Endothelial cell of umbilical vein (primary cell): ENCODE measurements at regions of chr20 and their contacts with region 1.

Region 1: DNA sequence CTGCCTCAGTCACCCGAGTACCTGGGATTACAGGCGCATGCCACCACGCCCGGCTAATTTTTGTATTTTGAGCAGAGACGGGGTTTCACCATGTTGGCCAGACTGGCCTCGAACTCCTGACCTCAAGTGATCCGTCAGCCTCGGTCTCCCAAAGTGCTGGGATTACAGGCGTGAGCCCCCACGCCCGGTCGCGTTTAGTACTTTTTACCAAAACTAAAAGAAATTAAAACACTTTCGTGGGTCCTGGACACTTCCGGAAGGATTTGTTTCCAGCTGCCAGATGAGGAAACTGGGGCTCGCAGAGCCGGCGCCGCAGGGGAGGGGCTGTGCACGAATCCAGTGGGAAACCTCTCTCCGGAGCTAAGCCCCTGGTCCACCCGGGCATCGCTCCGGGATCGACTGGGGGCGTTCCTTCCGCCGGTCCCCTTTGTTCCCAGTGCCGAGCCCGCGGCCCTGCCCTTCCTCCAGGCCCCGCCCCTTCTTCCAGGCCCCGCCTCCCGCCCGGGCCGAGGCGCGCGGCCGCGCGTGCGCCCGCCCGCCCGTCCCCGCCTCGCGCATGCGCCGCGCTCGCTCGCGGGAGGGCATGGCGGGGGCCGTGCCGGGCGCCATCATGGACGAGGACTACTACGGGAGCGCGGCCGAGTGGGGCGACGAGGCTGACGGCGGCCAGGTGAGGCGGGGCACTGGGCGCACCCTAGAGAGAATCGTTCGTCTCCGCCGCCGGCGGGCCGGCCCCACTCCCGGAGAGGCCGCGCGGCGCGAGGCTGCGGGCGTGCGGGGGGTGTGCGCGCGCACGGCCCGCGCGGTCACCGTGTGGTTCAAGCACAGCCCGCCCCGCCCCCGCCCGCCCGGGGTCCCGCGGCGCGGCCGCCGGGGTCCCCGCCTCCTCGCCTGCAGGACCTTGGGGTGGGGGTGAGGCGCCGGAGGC is at the start of gene NELFCD:
- DNase-seq: peak; percentile 79
- H3K4me3 ChIP-seq: peak within 1 kb of the TSS; percentile 84 to 98 (median 96)
- H3K27ac ChIP-seq: peak within 1 kb of the TSS; percentile 48
- H3K4me1 ChIP-seq: peaks cover 3% of the 10 kb centered on the region
- H3K27me3 ChIP-seq: peaks cover 0 to 1% of the 10 kb centered on the region in 2 experiments
- CTCF ChIP-seq: no peak
- POLR2A ChIP-seq: peak; percentile 79
- total RNA-seq, gene NELFCD: 92.5 and 93.2 TPM in 2 replicates

Region 2: GRCh38 chr20:58890518-58891085 is 90.4 kb before region 1 on chr20:
- CTCF ChIA-PET with region 1: no interaction called
- POLR2A ChIA-PET with region 1: no interaction called
- dilution Hi-C with region 1: no loop called
- intact Hi-C with region 1: loop called (anchors 2 kb)
- DNase-seq: peak; percentile 87
- H3K4me3 ChIP-seq: peak overlapping the region; percentile 17 to 91 (median 70)
- H3K27ac ChIP-seq: peak overlapping the region; percentile 47
- H3K4me1 ChIP-seq: peaks cover 30% of the 10 kb centered on the region
- H3K27me3 ChIP-seq: peaks cover 2% of the 10 kb centered on the region in 2 experiments
- CTCF ChIP-seq: no peak
- POLR2A ChIP-seq: peak; percentile 25

Region 3: GRCh38 chr20:59006864-59007664 is 26.1 kb after region 1 on chr20 and contains the start of gene CTSZ:
- CTCF ChIA-PET with region 1: no interaction called
- POLR2A ChIA-PET with region 1: no interaction called
- dilution Hi-C with region 1: no loop called
- intact Hi-C with region 1: loop called (anchors 1 kb)
- DNase-seq: peak; percentile 34
- H3K4me3 ChIP-seq: peak within 1 kb of the TSS; percentile 64 to 74 (median 68)
- H3K27ac ChIP-seq: peak within 1 kb of the TSS; percentile 89
- H3K4me1 ChIP-seq: peaks cover 41% of the 10 kb centered on the region
- H3K27me3 ChIP-seq: no peaks in the 10 kb centered on the region
- CTCF ChIP-seq: no peak
- POLR2A ChIP-seq: peak; percentile 81
- total RNA-seq, gene CTSZ: 299 and 304 TPM in 2 replicates

Region 4: DNA sequence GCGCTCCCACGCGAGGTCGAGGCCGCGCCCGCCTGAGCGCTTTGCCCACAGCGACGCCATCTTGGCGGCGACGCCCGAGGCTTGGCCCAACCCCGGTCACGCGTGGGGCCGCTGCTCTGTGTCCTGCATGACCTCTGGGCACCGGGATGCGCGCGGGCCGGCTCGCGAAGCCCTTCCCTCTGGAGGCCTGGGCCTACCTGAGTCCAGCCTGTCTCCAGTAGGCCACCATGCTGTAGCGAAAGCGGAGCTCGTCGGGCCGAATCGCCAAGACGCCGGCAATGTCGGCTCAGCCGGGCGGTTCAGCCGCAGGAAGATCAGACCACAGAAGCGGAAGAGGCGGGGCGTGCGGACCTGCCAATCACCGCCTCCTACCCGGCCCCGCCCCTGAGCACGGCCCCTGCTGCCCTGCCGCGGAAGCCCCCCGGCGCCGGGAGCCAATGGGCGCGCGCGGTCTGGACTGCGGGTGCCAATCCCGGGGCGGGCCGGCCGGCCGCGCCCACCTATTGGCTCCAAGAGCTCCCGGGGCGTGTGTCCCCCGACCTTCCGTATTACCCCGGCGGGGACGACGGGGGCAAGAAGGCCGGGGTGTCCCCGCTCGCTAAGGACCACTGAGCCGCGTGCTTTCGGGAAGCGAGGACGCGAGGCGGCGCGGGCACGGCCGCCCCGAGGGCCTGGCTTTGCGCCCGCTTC is 51.2 kb after region 1 on chr20 and contains the start of gene ATP5F1E:
- CTCF ChIA-PET with region 1: no interaction called
- POLR2A ChIA-PET with region 1: interaction called, 3 read pairs
- dilution Hi-C with region 1: no loop called
- intact Hi-C with region 1: loop called (anchors 1 kb)
- DNase-seq: peak; percentile 96
- H3K4me3 ChIP-seq: peak within 1 kb of the TSS; percentile 63 to 76 (median 76)
- H3K27ac ChIP-seq: peak within 1 kb of the TSS; percentile 82
- H3K4me1 ChIP-seq: peaks cover 43% of the 10 kb centered on the region
- H3K27me3 ChIP-seq: no peaks in the 10 kb centered on the region
- CTCF ChIP-seq: no peak
- POLR2A ChIP-seq: peak; percentile 94
- total RNA-seq, gene ATP5F1E: 107 and 114 TPM in 2 replicates

Region 5: GRCh38 chr20:59222253-59223181 is 241.6 kb after region 1 on chr20:
- CTCF ChIA-PET with region 1: no interaction called
- POLR2A ChIA-PET with region 1: no interaction called
- dilution Hi-C with region 1: no loop called
- intact Hi-C with region 1: loop called (anchors 10 kb)
- DNase-seq: peak; percentile 74
- H3K4me3 ChIP-seq: peak overlapping the region; percentile 42 to 71 (median 61)
- H3K27ac ChIP-seq: no peak overlapping the region
- H3K4me1 ChIP-seq: peaks cover 7% of the 10 kb centered on the region
- H3K27me3 ChIP-seq: peaks cover 20% of the 10 kb centered on the region in 2 experiments
- CTCF ChIP-seq: peak; percentile 96 to 97
- POLR2A ChIP-seq: no peak